ENCODE measurements at regions of chr11 and their contacts with region 1.

Region 1: DNA sequence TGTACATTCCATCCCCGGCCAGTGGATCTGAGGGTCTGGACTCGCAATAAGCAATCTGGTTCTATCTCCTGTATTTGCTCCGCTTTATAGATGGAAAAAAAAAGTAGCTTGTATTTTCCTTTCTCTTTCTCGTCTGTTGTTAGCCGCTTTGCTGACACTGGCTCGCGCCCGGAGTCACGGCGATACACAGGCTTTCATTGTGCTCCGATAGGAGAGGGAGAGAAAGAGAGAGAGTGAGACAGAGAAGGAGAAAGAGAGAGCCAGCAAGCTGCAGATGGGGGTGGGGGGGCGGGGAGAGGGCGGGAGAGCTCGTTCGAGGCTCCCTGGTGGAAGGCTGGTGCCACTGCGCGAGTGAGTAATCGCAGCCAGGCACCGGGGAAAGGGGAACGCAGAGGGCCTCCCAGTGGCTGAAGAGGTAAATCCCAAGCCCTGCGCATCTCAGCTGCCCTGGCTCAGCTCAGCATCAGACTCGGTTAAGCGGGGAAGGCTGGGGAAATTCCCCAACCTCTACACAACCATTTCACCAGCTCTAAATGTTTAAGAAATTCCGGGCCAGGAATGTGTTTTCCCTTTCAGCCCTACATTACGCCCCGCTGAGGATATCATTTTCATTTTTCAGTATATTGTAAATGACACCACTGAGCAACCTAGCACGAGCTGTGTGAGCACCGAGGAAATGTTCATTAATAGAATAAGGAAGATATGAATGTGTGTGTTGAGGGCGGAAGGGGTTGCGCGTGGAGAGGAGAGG is at the start of gene MAML2:
- DNase-seq: peak; percentile 93
- H3K4me3 Mint-ChIP-seq: peak within 1 kb of the TSS; percentile 97
- H3K27ac Mint-ChIP-seq: peak within 1 kb of the TSS; percentile 88
- H3K4me1 Mint-ChIP-seq: peaks cover 28% of the 10 kb centered on the region
- H3K27me3 Mint-ChIP-seq: no peaks in the 10 kb centered on the region
- total RNA-seq, gene MAML2: 19.2 to 19.3 TPM

Region 2: DNA sequence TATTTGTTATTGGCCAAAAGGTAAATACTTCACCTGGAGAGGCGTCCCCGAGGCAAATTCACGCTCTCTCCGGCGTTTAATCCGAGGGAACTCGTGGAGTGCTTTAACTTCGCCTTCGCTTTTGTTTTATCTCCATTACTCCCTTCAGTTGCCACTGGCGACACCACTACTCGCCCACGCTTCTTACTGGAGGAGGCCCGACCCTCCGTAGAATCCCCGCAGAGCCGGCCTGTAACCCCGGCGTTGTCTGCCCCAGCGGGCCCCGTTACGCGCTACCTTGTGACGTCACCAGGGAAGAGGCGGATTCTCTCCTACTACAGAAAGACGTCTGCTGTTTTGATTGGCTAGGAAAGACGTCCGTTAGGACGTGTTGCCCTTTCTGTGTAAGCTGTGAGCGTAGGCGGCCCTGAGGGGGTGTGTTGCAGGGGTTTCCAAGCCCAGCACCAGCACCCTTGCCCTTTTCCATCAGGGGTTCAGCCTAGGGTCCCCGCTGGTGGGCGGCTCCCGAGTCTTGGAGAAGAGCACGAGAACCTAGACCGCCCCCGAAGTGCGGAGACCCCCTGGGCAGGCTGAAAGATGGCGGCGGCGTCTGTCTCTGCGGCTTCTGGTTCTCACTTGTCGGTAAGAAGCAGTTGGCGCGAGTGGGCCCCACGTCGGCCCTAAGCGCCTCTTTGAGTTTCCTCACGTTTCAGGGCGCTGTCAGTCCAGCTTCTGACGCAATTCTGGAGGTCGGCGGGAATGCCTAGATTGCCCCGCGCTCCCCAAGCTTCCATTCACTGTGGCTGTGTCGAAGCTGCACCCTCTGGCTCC is 552.8 kb before region 1 on chr11 and contains the start of gene CEP57:
- CTCF ChIA-PET with region 1: interaction called, 29 read pairs
- POLR2A ChIA-PET with region 1: interaction called, 92 read pairs
- DNase-seq: peak; percentile 95
- H3K4me3 Mint-ChIP-seq: peak within 1 kb of the TSS; percentile 97
- H3K27ac Mint-ChIP-seq: peak within 1 kb of the TSS; percentile 100
- H3K4me1 Mint-ChIP-seq: peaks cover 61% of the 10 kb centered on the region
- H3K27me3 Mint-ChIP-seq: no peaks in the 10 kb centered on the region
- total RNA-seq, gene CEP57: 102 to 105 TPM

Region 3: GRCh38 chr11:96012086-96012824 is 330.9 kb before region 1 on chr11:
- CTCF ChIA-PET with region 1: interaction called, 17 read pairs
- POLR2A ChIA-PET with region 1: interaction called, 6 read pairs
- DNase-seq: peak; percentile 26
- H3K4me3 Mint-ChIP-seq: no peak overlapping the region
- H3K27ac Mint-ChIP-seq: no peak overlapping the region
- H3K4me1 Mint-ChIP-seq: peaks cover 45% of the 10 kb centered on the region
- H3K27me3 Mint-ChIP-seq: no peaks in the 10 kb centered on the region

Region 4: GRCh38 chr11:96188243-96189006 is 154.7 kb before region 1 on chr11:
- CTCF ChIA-PET with region 1: interaction called, 24 read pairs
- POLR2A ChIA-PET with region 1: interaction called, 4 read pairs
- DNase-seq: no peak
- H3K4me3 Mint-ChIP-seq: no peak overlapping the region
- H3K27ac Mint-ChIP-seq: peak overlapping the region; percentile 6
- H3K4me1 Mint-ChIP-seq: peaks cover 44% of the 10 kb centered on the region
- H3K27me3 Mint-ChIP-seq: no peaks in the 10 kb centered on the region

Region 5: DNA sequence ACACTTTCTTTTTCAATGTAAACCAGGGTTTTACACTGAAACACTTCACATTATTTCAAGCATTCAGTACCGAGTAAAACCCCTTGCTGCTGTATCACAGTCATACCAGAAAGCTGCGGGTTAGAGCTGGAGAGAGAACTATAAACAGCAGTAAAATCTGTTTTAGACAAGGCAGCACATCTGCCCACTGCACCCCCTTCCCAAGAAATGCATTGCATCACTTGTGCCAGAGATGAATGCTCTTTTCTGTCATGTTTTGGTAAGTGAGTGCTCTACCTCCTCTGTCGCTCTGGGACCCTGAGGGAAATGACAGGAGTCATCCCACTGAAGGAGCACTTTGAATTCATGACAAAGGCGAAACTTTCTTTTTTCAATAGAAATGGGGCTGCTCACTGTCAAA is 107.4 kb before region 1 on chr11:
- CTCF ChIA-PET with region 1: interaction called, 146 read pairs
- POLR2A ChIA-PET with region 1: interaction called, 73 read pairs
- DNase-seq: peak; percentile 69
- H3K4me3 Mint-ChIP-seq: peak overlapping the region; percentile 33
- H3K27ac Mint-ChIP-seq: peak overlapping the region; percentile 58
- H3K4me1 Mint-ChIP-seq: peaks cover 13% of the 10 kb centered on the region
- H3K27me3 Mint-ChIP-seq: no peaks in the 10 kb centered on the region

Region 6: GRCh38 chr11:96279018-96279895 is 63.9 kb before region 1 on chr11:
- CTCF ChIA-PET with region 1: interaction called, 16 read pairs
- POLR2A ChIA-PET with region 1: interaction called, 3 read pairs
- DNase-seq: no peak
- H3K4me3 Mint-ChIP-seq: no peak overlapping the region
- H3K27ac Mint-ChIP-seq: no peak overlapping the region
- H3K4me1 Mint-ChIP-seq: peaks cover 35% of the 10 kb centered on the region
- H3K27me3 Mint-ChIP-seq: no peaks in the 10 kb centered on the region

Region 7: GRCh38 chr11:96331699-96332116 is 11.4 kb before region 1 on chr11:
- CTCF ChIA-PET with region 1: interaction called, 33 read pairs
- POLR2A ChIA-PET with region 1: interaction called, 38 read pairs
- DNase-seq: no peak
- H3K4me3 Mint-ChIP-seq: no peak overlapping the region
- H3K27ac Mint-ChIP-seq: peak overlapping the region; percentile 40
- H3K4me1 Mint-ChIP-seq: peaks cover 63% of the 10 kb centered on the region
- H3K27me3 Mint-ChIP-seq: no peaks in the 10 kb centered on the region